CD4-positive, alpha-beta memory T cell (primary cell): ENCODE measurements at regions of chr9 and their contacts with region 1.

Region 1: GRCh38 chr9:78820855-78821822 is 524.2 kb downstream of the PSAT1 start:
- DNase-seq: peak in 3 of 5 donors; percentile 11 to 21 (median 13)
- H3K4me3 ChIP-seq: no peak overlapping the region
- H3K4me3 Mint-ChIP-seq: peak overlapping the region; percentile 68 to 83 (median 76)
- H3K27ac ChIP-seq: no peak overlapping the region
- H3K27ac Mint-ChIP-seq: peak overlapping the region in 1 of 7 donors; percentile 61
- H3K4me1 ChIP-seq: no peaks in the 10 kb centered on the region
- H3K4me1 Mint-ChIP-seq: peaks cover 0 to 9% (median 4%) of the 10 kb centered on the region in 4 donors
- H3K27me3 ChIP-seq: no peaks in the 10 kb centered on the region
- H3K27me3 Mint-ChIP-seq: peaks cover 0 to 1% of the 10 kb centered on the region in 2 donors

Region 2: DNA sequence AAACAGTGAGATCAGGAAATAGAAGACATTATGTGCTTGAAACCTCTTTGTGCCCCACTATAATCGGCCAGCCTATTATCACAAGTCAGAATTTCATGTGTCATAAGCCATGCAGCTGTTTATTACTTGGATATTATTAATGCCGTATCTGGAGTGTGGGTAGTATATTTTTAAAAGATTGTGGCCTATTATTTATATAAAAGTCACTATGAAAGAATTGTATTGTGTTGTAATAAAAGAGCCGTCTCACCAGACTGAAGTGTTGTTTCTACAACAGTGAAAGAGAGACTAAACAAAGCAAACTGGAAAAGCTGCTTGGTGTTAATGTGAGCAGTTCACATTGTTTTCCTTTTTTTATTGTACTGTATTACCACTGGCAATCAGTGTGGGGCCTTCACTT is 75.1 kb before region 1 on chr9:
- CTCF ChIA-PET with region 1: no interaction called
- POLR2A ChIA-PET with region 1: no interaction called
- intact Hi-C with region 1: no loop called
- DNase-seq: no peak
- H3K4me3 ChIP-seq: no peak overlapping the region
- H3K4me3 Mint-ChIP-seq: no peak overlapping the region
- H3K27ac ChIP-seq: no peak overlapping the region
- H3K27ac Mint-ChIP-seq: no peak overlapping the region
- H3K4me1 ChIP-seq: no peaks in the 10 kb centered on the region
- H3K4me1 Mint-ChIP-seq: no peaks in the 10 kb centered on the region
- H3K27me3 ChIP-seq: no peaks in the 10 kb centered on the region
- H3K27me3 Mint-ChIP-seq: no peaks in the 10 kb centered on the region

Region 3: GRCh38 chr9:79955300-79955699 is 1134.2 kb after region 1 on chr9:
- CTCF ChIA-PET with region 1: no interaction called
- POLR2A ChIA-PET with region 1: no interaction called
- intact Hi-C with region 1: loop called (anchors 5 kb)
- DNase-seq: peak in 2 of 5 donors; percentile 8 to 24
- H3K4me3 ChIP-seq: no peak overlapping the region
- H3K4me3 Mint-ChIP-seq: no peak overlapping the region
- H3K27ac ChIP-seq: no peak overlapping the region
- H3K27ac Mint-ChIP-seq: no peak overlapping the region
- H3K4me1 ChIP-seq: no peaks in the 10 kb centered on the region
- H3K4me1 Mint-ChIP-seq: no peaks in the 10 kb centered on the region
- H3K27me3 ChIP-seq: no peaks in the 10 kb centered on the region
- H3K27me3 Mint-ChIP-seq: peaks cover 2 to 3% of the 10 kb centered on the region in 2 donors